ENCODE measurements at regions of chr17 and their contacts with region 1.

Region 1: DNA sequence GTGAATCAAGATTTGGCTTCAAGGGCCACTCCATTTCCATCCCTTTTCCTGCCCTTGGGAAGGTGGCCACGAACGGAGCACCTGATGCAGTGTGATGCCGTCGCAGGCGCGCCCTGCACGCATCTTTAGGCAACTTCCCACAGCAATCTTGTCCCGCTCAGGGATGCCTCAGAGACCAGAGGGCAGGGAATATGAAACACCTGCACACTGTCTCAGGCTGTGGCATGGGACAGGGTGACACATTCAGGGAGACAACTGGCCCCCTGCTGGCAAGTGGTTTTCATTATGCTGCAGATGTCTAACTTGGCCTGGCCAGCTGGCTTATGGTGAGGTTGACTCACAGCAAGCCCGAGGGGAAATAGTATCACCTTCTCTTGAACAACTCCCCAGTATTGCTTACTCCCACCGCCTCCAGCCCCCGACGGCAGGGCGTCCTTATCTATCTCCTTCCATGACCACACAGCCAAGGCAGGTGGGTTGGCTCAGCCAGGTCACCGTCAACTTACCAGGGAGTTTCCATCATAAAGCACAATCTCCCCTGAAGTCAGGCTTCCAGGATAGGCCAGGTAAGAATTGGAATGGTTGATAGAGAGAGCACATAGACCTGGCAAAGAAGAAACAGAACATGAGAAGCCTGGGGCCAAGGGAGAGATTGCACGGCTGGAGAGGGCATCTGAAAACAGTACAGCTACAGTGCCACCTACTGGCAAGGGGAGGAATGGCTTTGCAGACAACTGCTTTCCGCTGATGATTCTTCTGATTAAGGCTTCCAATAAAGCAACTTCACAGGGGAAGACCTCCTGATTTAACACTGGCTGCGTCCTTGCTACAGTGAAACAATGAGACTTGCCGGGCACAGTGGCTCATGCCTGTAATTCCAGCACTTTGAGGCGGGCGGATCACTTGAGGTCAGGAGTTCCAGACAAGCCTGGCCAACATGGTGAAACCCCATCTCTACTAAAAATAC is 21.1 kb downstream of the WIPI1 start:
- DNase-seq: peak; percentile 86
- H3K4me3 Mint-ChIP-seq: no peak overlapping the region
- H3K27ac Mint-ChIP-seq: no peak overlapping the region
- H3K4me1 Mint-ChIP-seq: peaks cover 9% of the 10 kb centered on the region
- H3K27me3 Mint-ChIP-seq: no peaks in the 10 kb centered on the region
- CTCF ChIP-seq: peak; percentile 82

Region 2: DNA sequence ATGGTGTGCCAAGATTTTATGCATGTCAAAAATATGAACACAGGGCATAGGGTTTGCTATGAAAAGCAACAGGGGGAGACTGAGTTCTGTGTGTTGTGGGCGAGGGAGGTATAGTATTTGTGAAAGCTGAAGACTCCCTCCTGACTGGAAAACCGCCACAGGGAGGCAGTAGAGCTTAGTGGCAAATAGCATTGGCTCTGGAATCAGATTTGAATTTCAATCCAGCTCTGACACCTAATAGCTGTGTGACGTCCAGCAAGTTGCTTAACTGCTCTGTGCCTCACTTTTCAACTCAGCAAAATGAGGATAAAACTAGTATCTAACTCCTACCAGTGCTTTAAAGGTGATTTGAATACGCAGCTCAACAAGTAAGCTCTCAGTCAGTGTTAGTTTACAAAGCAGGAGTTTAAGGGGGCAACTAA is 378.6 kb before region 1 on chr17:
- CTCF ChIA-PET with region 1: no interaction called
- POLR2A ChIA-PET with region 1: no interaction called
- intact Hi-C with region 1: no loop called
- DNase-seq: peak; percentile 41
- H3K4me3 Mint-ChIP-seq: no peak overlapping the region
- H3K27ac Mint-ChIP-seq: no peak overlapping the region
- H3K4me1 Mint-ChIP-seq: peaks cover 11% of the 10 kb centered on the region
- H3K27me3 Mint-ChIP-seq: no peaks in the 10 kb centered on the region
- CTCF ChIP-seq: peak; percentile 21

Region 3: GRCh38 chr17:68398691-68399637 is 37.2 kb before region 1 on chr17:
- CTCF ChIA-PET with region 1: interaction called, 9 read pairs
- POLR2A ChIA-PET with region 1: no interaction called
- intact Hi-C with region 1: loop called (anchors 1 kb)
- DNase-seq: peak; percentile 82
- H3K4me3 Mint-ChIP-seq: no peak overlapping the region
- H3K27ac Mint-ChIP-seq: no peak overlapping the region
- H3K4me1 Mint-ChIP-seq: no peaks in the 10 kb centered on the region
- H3K27me3 Mint-ChIP-seq: no peaks in the 10 kb centered on the region
- CTCF ChIP-seq: peak; percentile 60

Measured in MCF 10A (cell line).